ENCODE measurements at regions of chr12 and their contacts with region 1.

Region 1: DNA sequence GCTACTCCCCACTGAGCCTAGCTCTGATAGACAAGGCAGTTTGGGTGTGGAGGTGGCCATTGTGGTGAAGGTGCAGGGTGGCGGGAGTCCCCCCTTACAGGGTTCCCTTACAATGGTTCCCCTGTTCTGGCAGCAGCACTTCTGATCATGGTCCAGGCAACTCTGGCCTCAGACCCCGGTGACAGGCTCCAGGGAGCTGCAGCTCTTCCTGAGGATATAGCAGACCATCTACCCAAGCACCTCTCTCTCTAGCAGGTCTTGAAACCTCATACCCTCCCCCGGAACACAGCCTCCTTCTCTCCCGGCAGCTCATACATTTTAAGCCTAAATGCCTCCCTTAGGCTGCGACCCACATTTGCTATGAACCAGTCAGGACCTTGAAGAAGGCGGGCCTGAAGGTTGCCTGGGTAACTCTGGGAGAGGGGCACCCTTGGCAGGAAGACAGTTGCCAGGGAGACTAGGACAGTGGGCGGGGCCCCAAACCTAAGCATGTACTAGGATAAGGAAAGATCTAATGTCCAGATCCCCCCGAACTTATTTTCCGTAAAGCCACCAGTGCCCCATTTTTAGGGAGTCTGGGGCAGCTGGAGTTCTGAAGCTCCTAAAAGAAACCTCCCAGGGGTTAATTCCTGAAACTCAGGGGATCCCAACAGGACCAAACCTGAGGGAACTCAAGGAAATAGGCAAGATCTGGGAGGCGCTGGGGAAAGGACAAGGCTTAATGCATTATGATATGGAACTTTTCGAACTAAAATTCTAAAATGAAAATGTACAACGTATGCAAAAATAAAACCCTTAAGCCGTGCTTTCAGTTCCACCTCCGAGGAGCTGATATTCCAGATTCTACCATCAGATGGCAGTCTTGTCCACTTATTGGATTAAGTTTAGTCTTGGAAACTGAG is 4.5 kb upstream of the GDF11 start:
- DNase-seq: peak; percentile 77
- ATAC-seq: peak; percentile 93
- H3K4me3 ChIP-seq: peak overlapping the region; percentile 78
- H3K27ac ChIP-seq: peak overlapping the region; percentile 45
- H3K4me1 ChIP-seq: peaks cover 7% of the 10 kb centered on the region
- H3K27me3 ChIP-seq: no peaks in the 10 kb centered on the region
- CTCF ChIP-seq: peak; percentile 68 to 89 (median 87); a peak in 5 of 6 replicates
- EP300 ChIP-seq: no peak
- POLR2A ChIP-seq: no peak
- RAD21 ChIP-seq: peak; percentile 96

Region 2: DNA sequence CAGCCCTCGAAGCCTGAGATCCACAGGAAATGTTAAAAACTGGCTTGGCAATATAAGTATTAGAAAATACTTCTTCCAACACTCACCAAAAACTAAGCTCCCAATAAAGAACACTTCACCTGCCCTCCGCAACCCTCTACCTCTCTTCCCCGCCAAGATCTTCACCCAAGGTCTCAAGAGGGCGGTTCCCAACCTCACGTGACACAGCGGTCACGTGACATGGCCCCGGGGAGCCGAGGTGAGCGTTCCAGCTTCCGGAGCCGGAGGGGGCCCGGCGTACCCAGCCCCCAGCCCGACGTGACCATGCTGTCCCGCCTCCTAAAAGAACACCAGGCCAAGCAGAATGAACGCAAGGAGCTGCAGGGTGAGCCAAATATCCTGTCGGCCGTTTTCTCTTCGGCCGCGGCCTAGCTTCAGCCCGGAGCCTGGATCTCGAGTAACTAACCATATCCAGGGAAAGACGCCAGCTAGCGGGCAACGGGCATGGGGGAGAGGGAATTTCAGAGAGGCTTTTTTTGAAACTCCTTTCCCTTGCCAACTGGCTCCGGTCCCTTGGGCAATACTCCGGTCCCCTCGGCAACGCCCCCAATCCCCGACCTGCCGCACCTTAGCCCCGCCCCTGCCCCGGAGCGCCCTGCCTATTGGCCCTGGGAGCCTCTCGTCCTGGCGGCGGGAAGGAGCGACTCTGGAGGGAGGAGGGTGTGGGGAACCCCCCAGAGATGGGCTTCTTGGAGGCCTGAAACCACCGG is 22.4 kb before region 1 on chr12 and contains the start of gene BLOC1S1:
- CTCF ChIA-PET with region 1: interaction called, 205 read pairs
- POLR2A ChIA-PET with region 1: interaction called, 5 read pairs
- RAD21 ChIA-PET with region 1: interaction called, 113 read pairs
- SMC1A ChIA-PET with region 1: interaction called, 29 read pairs
- in situ Hi-C with region 1: no loop called
- intact Hi-C with region 1: loop called (anchors 2 kb)
- DNase-seq: peak; percentile 73
- ATAC-seq: peak; percentile 95
- H3K4me3 ChIP-seq: peak within 1 kb of the TSS; percentile 81
- H3K27ac ChIP-seq: peak within 1 kb of the TSS; percentile 95
- H3K4me1 ChIP-seq: peaks cover 20% of the 10 kb centered on the region
- H3K27me3 ChIP-seq: no peaks in the 10 kb centered on the region
- CTCF ChIP-seq: no peak
- EP300 ChIP-seq: no peak
- POLR2A ChIP-seq: peak; percentile 74
- RAD21 ChIP-seq: 0 out of 2 replicates have a peak, but pooled peaks have one; percentile 26
- polyA plus RNA-seq, gene BLOC1S1: 264 to 285 TPM

Region 3: GRCh38 chr12:55817346-55818139 is 79.2 kb after region 1 on chr12 and contains the starts of genes ORMDL2 and SARNP:
- CTCF ChIA-PET with region 1: interaction called, 26 read pairs
- POLR2A ChIA-PET with region 1: interaction called, 38 read pairs
- RAD21 ChIA-PET with region 1: interaction called, 36 read pairs
- SMC1A ChIA-PET with region 1: interaction called, 22 read pairs
- in situ Hi-C with region 1: no loop called
- intact Hi-C with region 1: loop called (anchors 2 kb)
- DNase-seq: peak; percentile 100
- ATAC-seq: peak; percentile 98
- H3K4me3 ChIP-seq: peak within 1 kb of the TSS; percentile 85
- H3K27ac ChIP-seq: peak within 1 kb of the TSS; percentile 92
- H3K4me1 ChIP-seq: peaks cover 10% of the 10 kb centered on the region; the same call in 1 of the 2 replicates
- H3K27me3 ChIP-seq: no peaks in the 10 kb centered on the region
- CTCF ChIP-seq: no peak
- EP300 ChIP-seq: no peak
- POLR2A ChIP-seq: peak; percentile 86
- RAD21 ChIP-seq: no peak
- polyA plus RNA-seq, gene ORMDL2: 123 to 135 TPM
- polyA plus RNA-seq, gene SARNP: 419 to 445 TPM

Region 4: GRCh38 chr12:55940065-55940732 is 201.8 kb after region 1 on chr12:
- CTCF ChIA-PET with region 1: interaction called, 80 read pairs
- POLR2A ChIA-PET with region 1: interaction called, 18 read pairs
- RAD21 ChIA-PET with region 1: interaction called, 43 read pairs
- SMC1A ChIA-PET with region 1: interaction called, 51 read pairs
- in situ Hi-C with region 1: loop called (anchors 5 kb)
- intact Hi-C with region 1: loop called (anchors 1 kb)
- DNase-seq: peak; percentile 60
- ATAC-seq: peak; percentile 100
- H3K4me3 ChIP-seq: no peak overlapping the region
- H3K27ac ChIP-seq: no peak overlapping the region
- H3K4me1 ChIP-seq: peaks cover 10% of the 10 kb centered on the region
- H3K27me3 ChIP-seq: no peaks in the 10 kb centered on the region
- CTCF ChIP-seq: peak; percentile 91 to 95 (median 94); a peak in 5 of 6 replicates
- EP300 ChIP-seq: no peak
- POLR2A ChIP-seq: no peak
- RAD21 ChIP-seq: peak; percentile 82

Region 5: DNA sequence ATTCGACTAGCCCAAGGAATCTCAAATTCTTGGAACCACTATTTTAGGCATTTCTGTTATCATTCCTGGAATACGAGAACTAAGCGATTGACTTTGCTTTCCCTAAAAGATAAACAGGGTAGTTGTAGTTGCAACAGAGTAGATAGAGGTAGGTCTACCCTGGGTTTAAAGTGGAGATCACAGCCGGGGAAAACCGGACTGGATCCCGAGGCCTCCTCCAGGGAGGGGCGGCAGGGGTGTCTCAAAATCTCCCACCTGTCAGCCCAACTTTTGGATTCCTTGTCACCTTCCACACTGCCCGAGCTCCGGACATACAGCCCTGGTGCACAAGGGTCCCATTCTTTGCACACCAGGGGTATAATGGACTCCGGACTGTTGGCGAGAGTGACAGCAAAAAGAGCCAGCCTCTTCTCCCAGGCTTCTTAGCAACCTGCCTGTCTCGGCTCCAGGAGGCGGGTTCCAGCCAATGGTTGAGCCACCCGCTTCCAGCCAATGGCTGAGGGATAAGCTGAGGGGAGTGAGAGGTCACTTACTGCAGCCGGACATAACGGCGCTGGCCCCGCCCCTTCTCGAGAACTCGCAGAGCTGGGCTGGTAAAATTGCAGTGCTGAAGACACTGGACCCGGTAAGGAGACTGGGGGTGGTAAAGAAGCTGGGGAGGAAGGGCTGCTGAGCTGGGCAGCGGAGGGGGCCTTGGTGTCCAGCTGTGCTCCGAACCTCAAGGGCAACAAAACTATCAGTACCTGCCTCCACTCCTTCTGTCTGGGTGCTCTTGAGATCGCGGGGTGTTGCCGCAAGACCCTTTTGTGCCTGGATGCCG is 258.6 kb after region 1 on chr12 and contains the start of gene SUOX:
- CTCF ChIA-PET with region 1: interaction called, 29 read pairs
- POLR2A ChIA-PET with region 1: interaction called, 3 read pairs
- RAD21 ChIA-PET with region 1: interaction called, 14 read pairs
- SMC1A ChIA-PET with region 1: interaction called, 24 read pairs
- in situ Hi-C with region 1: no loop called
- intact Hi-C with region 1: no loop called
- DNase-seq: peak; percentile 83
- ATAC-seq: peak; percentile 100
- H3K4me3 ChIP-seq: peak within 1 kb of the TSS; percentile 74
- H3K27ac ChIP-seq: peak within 1 kb of the TSS; percentile 33; the same call in 1 of the 2 replicates
- H3K4me1 ChIP-seq: peaks cover 3% of the 10 kb centered on the region; the same call in 1 of the 2 replicates
- H3K27me3 ChIP-seq: no peaks in the 10 kb centered on the region
- CTCF ChIP-seq: no peak
- EP300 ChIP-seq: no peak
- POLR2A ChIP-seq: peak; percentile 72
- RAD21 ChIP-seq: no peak
- polyA plus RNA-seq, gene SUOX: 5.1 to 5.2 TPM

Region 6: GRCh38 chr12:56189176-56189917 is 451.0 kb after region 1 on chr12 and contains the start of gene SMARCC2:
- CTCF ChIA-PET with region 1: interaction called, 18 read pairs
- POLR2A ChIA-PET with region 1: interaction called, 3 read pairs
- RAD21 ChIA-PET with region 1: interaction called, 32 read pairs
- SMC1A ChIA-PET with region 1: interaction called, 5 read pairs
- in situ Hi-C with region 1: no loop called
- intact Hi-C with region 1: loop called (anchors 10 kb)
- DNase-seq: peak; percentile 26
- ATAC-seq: peak; percentile 81
- H3K4me3 ChIP-seq: peak within 1 kb of the TSS; percentile 98
- H3K27ac ChIP-seq: peak within 1 kb of the TSS; percentile 91
- H3K4me1 ChIP-seq: 0 out of 2 replicates have a peak, but pooled peaks cover 4% of the 10 kb centered on the region
- H3K27me3 ChIP-seq: no peaks in the 10 kb centered on the region
- CTCF ChIP-seq: peak; percentile 68 to 87 (median 72); a peak in 5 of 6 replicates
- EP300 ChIP-seq: no peak
- POLR2A ChIP-seq: peak; percentile 79
- RAD21 ChIP-seq: peak; percentile 46
- polyA plus RNA-seq, gene SMARCC2: 13.6 to 27.8 TPM